GM12878 (cell line): ENCODE measurements at regions of chr14 and their contacts with region 1.

Region 1: GRCh38 chr14:55102141-55102621 is 26.9 kb upstream of the LGALS3 start:
- DNase-seq: peak; percentile 99
- ATAC-seq: peak; percentile 84
- H3K4me3 ChIP-seq: 0 out of 2 replicates have a peak overlapping the region, but pooled peaks have one; percentile 4
- H3K27ac ChIP-seq: peak overlapping the region; percentile 99
- H3K4me1 ChIP-seq: peaks cover 62% of the 10 kb centered on the region
- H3K27me3 ChIP-seq: no peaks in the 10 kb centered on the region
- CTCF ChIP-seq: no peak
- EP300 ChIP-seq: peak; percentile 88 to 93; a peak in 3 of 4 replicates
- POLR2A ChIP-seq: peak; percentile 64
- RAD21 ChIP-seq: no peak

Region 2: DNA sequence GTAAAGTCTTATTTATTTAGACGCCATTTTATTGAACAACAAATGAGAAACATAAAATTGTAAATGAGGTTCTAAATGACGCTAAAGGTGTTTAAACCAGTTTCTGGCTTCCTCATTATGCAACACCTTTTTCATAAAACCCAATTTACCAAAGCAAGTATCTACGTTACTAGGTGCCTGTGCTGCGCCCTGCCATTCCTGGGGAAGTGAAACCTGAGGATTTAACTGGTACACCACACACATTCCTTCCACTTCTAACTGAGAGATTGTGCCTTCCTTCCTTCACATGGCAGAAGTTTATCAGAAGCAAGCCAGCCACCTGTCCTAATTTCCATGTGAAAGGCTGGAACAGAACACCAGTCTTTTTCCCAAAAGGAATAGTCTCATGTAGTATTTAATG is 159.3 kb before region 1 on chr14:
- CTCF ChIA-PET with region 1: no interaction called
- POLR2A ChIA-PET with region 1: no interaction called
- RAD21 ChIA-PET with region 1: no interaction called
- SMC1A ChIA-PET with region 1: no interaction called
- in situ Hi-C with region 1: no loop called
- intact Hi-C with region 1: no loop called
- DNase-seq: no peak
- ATAC-seq: peak; percentile 30; the same call in 1 of the 3 replicates
- H3K4me3 ChIP-seq: no peak overlapping the region
- H3K27ac ChIP-seq: no peak overlapping the region
- H3K4me1 ChIP-seq: no peaks in the 10 kb centered on the region
- H3K27me3 ChIP-seq: no peaks in the 10 kb centered on the region
- CTCF ChIP-seq: no peak
- EP300 ChIP-seq: no peak
- POLR2A ChIP-seq: no peak
- RAD21 ChIP-seq: no peak

Region 3: GRCh38 chr14:54981698-54982097 is 120.5 kb before region 1 on chr14:
- CTCF ChIA-PET with region 1: no interaction called
- POLR2A ChIA-PET with region 1: no interaction called
- RAD21 ChIA-PET with region 1: no interaction called
- SMC1A ChIA-PET with region 1: no interaction called
- in situ Hi-C with region 1: no loop called
- intact Hi-C with region 1: no loop called
- DNase-seq: no peak
- ATAC-seq: no peak
- H3K4me3 ChIP-seq: no peak overlapping the region
- H3K27ac ChIP-seq: no peak overlapping the region
- H3K4me1 ChIP-seq: no peaks in the 10 kb centered on the region
- H3K27me3 ChIP-seq: no peaks in the 10 kb centered on the region
- CTCF ChIP-seq: no peak; a peak in 1 of 6 replicates
- EP300 ChIP-seq: no peak
- POLR2A ChIP-seq: no peak
- RAD21 ChIP-seq: no peak

Region 4: DNA sequence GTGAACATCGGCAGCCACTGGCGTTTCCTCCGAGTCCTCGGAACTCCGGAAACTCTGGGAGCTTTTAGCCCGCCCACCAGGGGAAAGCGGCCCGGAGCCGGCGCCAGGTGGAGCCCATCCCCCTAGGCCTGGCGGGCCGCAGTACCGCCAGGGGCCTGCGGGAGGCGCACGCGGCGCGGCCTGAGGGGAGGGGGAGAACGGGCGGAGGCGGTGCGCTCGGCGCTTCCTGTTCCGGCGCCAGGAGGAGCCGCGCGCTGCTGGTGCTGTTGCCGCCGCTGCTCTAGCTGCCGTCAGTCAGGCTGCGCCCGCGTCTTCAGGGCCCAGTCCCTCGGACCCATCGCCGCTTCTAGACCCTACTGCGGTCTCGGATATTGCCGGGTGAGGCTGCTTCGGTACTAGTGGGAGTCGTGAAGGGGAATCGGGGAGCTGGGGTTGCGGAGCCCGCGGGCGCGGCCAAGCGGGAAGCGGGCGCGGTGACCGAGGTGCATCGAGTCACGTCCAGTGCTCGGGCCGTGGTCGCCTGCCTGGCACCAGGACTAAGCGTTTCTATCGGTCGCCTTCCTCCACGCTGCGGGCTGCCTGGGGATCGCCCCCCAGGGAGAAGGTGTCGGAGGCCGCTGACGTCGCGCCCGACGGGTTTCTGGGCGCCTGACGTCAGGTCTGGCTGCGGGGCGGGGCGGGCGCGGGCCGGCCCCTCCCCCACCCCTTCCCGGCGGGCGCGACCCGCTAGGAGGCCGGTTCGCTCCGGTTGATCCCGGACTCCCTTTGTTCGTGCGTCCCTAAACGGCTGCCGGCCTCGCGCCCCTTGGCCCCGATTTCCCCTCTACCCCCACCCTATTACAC is 50.5 kb before region 1 on chr14 and contains the start of gene MAPK1IP1L:
- CTCF ChIA-PET with region 1: interaction called, 7 read pairs
- POLR2A ChIA-PET with region 1: interaction called, 12 read pairs
- RAD21 ChIA-PET with region 1: interaction called, 17 read pairs
- SMC1A ChIA-PET with region 1: interaction called, 18 read pairs
- in situ Hi-C with region 1: no loop called
- intact Hi-C with region 1: loop called (anchors 2 kb)
- DNase-seq: peak; percentile 63
- ATAC-seq: peak; percentile 93
- H3K4me3 ChIP-seq: peak within 1 kb of the TSS; percentile 82
- H3K27ac ChIP-seq: peak within 1 kb of the TSS; percentile 99
- H3K4me1 ChIP-seq: no peaks in the 10 kb centered on the region; the same call in 1 of the 2 replicates
- H3K27me3 ChIP-seq: no peaks in the 10 kb centered on the region
- CTCF ChIP-seq: peak; percentile 96 to 99 (median 99); a peak in 5 of 6 replicates
- EP300 ChIP-seq: peak; percentile 37 to 41; a peak in 2 of 4 replicates
- POLR2A ChIP-seq: peak; percentile 100
- RAD21 ChIP-seq: peak; percentile 68
- polyA plus RNA-seq, gene MAPK1IP1L: 55.7 to 66.0 TPM

Region 5: GRCh38 chr14:55085060-55085660 is 17.0 kb before region 1 on chr14:
- CTCF ChIA-PET with region 1: interaction called, 21 read pairs
- POLR2A ChIA-PET with region 1: interaction called, 6 read pairs
- RAD21 ChIA-PET with region 1: interaction called, 15 read pairs
- SMC1A ChIA-PET with region 1: interaction called, 10 read pairs
- in situ Hi-C with region 1: no loop called
- intact Hi-C with region 1: no loop called
- DNase-seq: no peak
- ATAC-seq: no peak
- H3K4me3 ChIP-seq: no peak overlapping the region
- H3K27ac ChIP-seq: no peak overlapping the region
- H3K4me1 ChIP-seq: 0 out of 2 replicates have a peak, but pooled peaks cover under 1% of the 10 kb centered on the region
- H3K27me3 ChIP-seq: no peaks in the 10 kb centered on the region
- CTCF ChIP-seq: no peak
- EP300 ChIP-seq: no peak
- POLR2A ChIP-seq: no peak
- RAD21 ChIP-seq: no peak

Region 6: DNA sequence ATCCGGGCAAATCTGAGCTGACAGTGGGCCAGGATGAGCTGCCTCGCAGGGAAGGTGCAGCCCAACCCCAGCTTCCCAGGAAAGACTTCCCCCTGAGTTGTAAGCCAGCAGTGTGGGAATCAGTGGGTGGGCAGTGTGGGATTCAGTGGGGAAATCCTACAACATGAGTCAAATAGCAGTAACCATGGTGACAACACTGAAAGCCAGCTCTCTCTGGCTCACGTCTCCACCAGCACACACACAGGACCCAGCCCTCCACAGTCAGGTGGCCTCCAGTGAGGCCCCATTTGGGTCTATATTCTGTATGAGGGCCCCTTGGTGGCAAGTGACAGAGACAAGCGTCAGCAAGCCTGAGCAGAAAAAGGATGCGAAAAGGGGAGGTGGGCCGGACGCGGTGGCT is 20.9 kb after region 1 on chr14:
- CTCF ChIA-PET with region 1: interaction called, 5 read pairs
- POLR2A ChIA-PET with region 1: interaction called, 14 read pairs
- RAD21 ChIA-PET with region 1: interaction called, 4 read pairs
- SMC1A ChIA-PET with region 1: interaction called, 8 read pairs
- in situ Hi-C with region 1: no loop called
- intact Hi-C with region 1: no loop called
- DNase-seq: no peak
- ATAC-seq: peak; percentile 35
- H3K4me3 ChIP-seq: no peak overlapping the region
- H3K27ac ChIP-seq: no peak overlapping the region
- H3K4me1 ChIP-seq: peaks cover 6% of the 10 kb centered on the region; the same call in 1 of the 2 replicates
- H3K27me3 ChIP-seq: no peaks in the 10 kb centered on the region
- CTCF ChIP-seq: no peak
- EP300 ChIP-seq: no peak
- POLR2A ChIP-seq: no peak
- RAD21 ChIP-seq: no peak

Region 7: DNA sequence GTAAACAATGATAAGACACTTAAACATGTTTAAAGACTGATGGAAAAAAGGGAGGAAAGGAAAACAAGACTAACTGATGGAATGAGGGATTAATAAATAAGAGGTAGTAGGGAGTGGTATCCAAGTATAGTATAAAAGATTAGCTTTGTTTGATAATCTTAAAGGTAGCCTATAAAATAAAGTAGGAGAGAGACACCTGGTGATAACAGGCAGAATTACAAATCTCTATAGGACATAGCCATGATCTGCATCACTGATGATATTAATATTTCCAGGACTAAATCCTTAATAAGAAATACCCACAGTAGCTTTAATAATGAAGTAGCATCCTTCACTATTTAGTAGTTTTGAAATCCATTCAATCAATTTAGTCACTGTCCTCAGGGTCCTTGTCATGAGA is 58.8 kb after region 1 on chr14:
- CTCF ChIA-PET with region 1: interaction called, 16 read pairs
- POLR2A ChIA-PET with region 1: no interaction called
- RAD21 ChIA-PET with region 1: interaction called, 6 read pairs
- SMC1A ChIA-PET with region 1: interaction called, 22 read pairs
- in situ Hi-C with region 1: no loop called
- intact Hi-C with region 1: no loop called
- DNase-seq: no peak
- ATAC-seq: peak; percentile 65
- H3K4me3 ChIP-seq: no peak overlapping the region
- H3K27ac ChIP-seq: no peak overlapping the region
- H3K4me1 ChIP-seq: no peaks in the 10 kb centered on the region
- H3K27me3 ChIP-seq: no peaks in the 10 kb centered on the region
- CTCF ChIP-seq: peak; percentile 32 to 67 (median 38); a peak in 5 of 6 replicates
- EP300 ChIP-seq: no peak
- POLR2A ChIP-seq: no peak
- RAD21 ChIP-seq: peak; percentile 64